Activated CD4-positive, alpha-beta memory T cell treated with anti-CD3 and anti-CD28 coated beads, Interleukin-2, amount 10 ng/mL, durations not matched to agents 7 days and 5 days (primary cell): ENCODE measurements at regions of chr9 and their contacts with region 1.

Region 1: GRCh38 chr9:137590462-137591383 is at the start of gene ZMYND19:
- DNase-seq: peak; percentile 90
- H3K4me3 Mint-ChIP-seq: peak within 1 kb of the TSS; percentile 92
- H3K27ac Mint-ChIP-seq: peak within 1 kb of the TSS; percentile 83
- H3K4me1 Mint-ChIP-seq: peaks cover 22% of the 10 kb centered on the region
- H3K27me3 Mint-ChIP-seq: no peaks in the 10 kb centered on the region
- total RNA-seq, gene ZMYND19: 24.0 to 25.4 TPM

Region 2: DNA sequence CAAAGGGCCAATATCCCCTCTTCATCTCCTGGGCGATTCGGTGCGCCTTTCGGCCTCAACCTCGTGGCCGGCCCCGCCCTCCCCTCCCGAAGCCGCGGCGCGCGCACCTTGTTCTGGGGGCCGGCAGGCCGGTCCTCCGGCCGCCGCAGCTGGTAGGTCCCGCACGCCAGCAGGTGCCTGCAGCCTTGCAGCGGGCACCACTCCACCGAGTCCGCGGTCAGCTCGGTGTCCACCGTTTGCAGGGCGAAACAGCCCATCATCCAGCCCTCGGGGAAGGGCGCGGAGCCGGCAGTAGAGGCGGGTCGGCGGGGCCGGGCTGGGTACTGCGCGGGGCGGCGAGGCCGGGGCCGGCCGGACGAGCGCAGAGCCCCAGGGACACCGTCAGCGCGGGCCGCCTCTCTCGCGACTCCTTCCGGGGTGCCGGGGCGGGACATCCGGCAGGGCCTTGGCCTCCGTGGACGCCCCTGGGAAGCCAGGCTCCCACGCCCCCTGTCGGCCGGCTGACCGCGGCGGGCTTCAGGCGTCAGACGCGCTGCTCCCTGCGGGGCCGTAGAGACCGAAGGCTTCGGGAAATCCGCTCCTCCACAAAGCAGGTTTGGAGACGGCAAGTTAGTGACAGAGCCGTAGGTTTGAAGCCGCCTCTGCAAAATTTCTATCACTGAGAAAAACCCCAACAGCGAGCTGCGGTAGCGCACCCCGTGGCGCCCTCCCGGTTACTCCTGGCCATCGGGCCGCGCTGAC is 12.0 kb before region 1 on chr9 and contains the start of gene DPH7:
- CTCF ChIA-PET with region 1: interaction called, 18 read pairs
- POLR2A ChIA-PET with region 1: interaction called, 10 read pairs
- DNase-seq: peak; percentile 96
- H3K4me3 Mint-ChIP-seq: peak within 1 kb of the TSS; percentile 78
- H3K27ac Mint-ChIP-seq: peak within 1 kb of the TSS; percentile 65
- H3K4me1 Mint-ChIP-seq: peaks cover 37% of the 10 kb centered on the region
- H3K27me3 Mint-ChIP-seq: no peaks in the 10 kb centered on the region
- total RNA-seq, gene DPH7: 31.9 to 34.2 TPM

Region 3: DNA sequence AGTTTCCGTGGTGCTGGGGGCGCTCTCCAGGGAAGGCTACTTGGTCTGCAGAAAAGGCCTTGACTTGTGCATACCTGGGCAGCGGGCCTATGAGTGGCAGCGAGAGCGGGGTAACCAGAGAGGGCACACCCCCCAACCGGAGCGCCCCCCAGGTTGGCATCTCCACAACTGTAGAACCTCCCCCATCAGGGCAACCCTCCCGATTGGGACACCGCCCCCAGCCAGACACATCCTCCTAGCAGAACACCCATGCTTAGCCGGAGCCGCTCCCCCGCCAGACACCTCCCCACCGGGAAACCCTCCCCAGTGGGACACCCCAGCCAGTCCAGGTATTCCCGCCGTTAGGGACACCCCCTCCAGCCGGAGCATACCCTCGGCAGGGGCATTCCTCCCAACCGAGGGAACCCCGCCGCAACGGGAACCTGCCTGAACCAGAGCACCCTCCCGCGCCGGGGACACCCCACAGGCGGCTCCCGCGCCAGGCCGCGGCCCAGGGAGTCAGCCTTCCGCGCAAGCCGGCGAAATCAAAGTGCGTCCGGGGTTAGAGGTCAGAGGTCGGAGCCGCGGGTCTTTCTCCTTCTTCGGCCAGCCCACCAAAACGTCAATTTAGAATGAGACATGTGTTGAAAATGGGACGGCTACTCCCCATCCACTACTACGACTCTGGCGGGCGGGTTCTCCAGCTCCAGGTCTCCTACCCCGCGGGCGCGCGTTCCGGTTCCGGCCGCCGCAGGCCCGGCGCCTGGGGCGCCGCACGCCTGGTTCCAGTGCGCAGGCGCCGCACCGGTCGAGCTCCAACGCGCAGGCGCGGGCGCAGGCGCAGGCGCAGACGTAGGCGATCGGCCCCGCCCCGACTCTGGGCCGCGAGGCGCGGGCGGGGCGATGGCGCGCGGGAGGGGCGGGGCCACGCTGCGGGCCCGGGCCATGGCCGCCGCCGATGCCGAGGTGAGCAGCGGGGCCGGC is 27.7 kb after region 1 on chr9 and contains the start of gene EHMT1:
- CTCF ChIA-PET with region 1: interaction called, 3 read pairs
- POLR2A ChIA-PET with region 1: interaction called, 12 read pairs
- DNase-seq: peak; percentile 92
- H3K4me3 Mint-ChIP-seq: peak within 1 kb of the TSS; percentile 83
- H3K27ac Mint-ChIP-seq: peak within 1 kb of the TSS; percentile 88
- H3K4me1 Mint-ChIP-seq: peaks cover 41% of the 10 kb centered on the region
- H3K27me3 Mint-ChIP-seq: no peaks in the 10 kb centered on the region
- total RNA-seq, gene EHMT1: 87.1 to 91.4 TPM

Region 4: GRCh38 chr9:137639303-137640051 is 48.8 kb after region 1 on chr9:
- CTCF ChIA-PET with region 1: no interaction called
- POLR2A ChIA-PET with region 1: no interaction called
- DNase-seq: no peak
- H3K4me3 Mint-ChIP-seq: peak overlapping the region; percentile 69
- H3K27ac Mint-ChIP-seq: peak overlapping the region; percentile 78
- H3K4me1 Mint-ChIP-seq: peaks cover 36% of the 10 kb centered on the region
- H3K27me3 Mint-ChIP-seq: no peaks in the 10 kb centered on the region